Kidney (tissue), 22 donors: ENCODE measurements at regions of chr12 and their contacts with region 1.

Region 1: DNA sequence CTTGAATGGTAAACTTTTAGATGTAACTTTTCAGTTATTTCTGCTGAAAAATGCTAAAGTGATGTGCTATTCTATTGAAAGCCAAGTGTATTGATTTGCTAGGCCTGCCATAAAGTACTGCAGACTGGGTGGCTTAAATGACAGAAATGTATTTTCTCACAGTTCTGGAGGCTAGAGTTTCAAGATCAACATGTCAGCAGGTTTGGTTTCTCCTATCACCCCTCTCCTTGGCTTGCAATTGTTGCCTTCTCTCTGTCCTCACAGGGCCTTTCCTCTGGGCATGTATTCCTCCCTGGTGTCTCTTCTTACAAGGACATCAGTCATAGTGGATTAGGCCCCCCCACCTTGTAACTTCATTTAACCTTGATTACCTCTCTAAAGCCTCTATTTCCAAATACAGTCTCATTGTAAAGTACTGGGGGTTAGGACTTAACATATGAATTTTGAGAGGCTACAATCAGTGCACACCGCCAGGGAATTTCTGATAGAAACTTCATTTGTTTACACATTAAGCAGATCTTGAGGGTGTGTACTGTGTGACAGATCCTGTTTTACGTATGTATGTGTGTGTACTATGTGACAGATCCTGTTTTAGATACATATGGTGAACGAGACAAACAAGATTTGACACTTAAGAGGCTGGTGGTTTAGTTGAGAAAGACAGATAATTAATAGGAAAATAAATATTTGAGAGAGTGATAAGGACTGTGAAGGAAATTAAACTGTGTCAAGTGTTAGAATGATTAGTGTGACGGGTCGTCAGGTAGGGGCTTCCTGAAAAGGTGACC is 49.5 kb downstream of the ADIPOR2 start:
- DNase-seq: peak in 3 of 5 donors; percentile 58 to 84 (median 79)
- H3K4me3 ChIP-seq: no peak overlapping the region
- H3K27ac ChIP-seq: no peak overlapping the region
- H3K4me1 ChIP-seq: peaks cover 0 to 2% (median 0%) of the 10 kb centered on the region in 3 donors
- H3K27me3 ChIP-seq: no peaks in the 10 kb centered on the region
- CTCF ChIP-seq: no peak

Region 2: GRCh38 chr12:1690578-1691122 is 49.7 kb before region 1 on chr12 and contains the start of gene ADIPOR2:
- intact Hi-C with region 1: loop called (anchors 10 kb)
- DNase-seq: peak; percentile 96 to 99 (median 98)
- H3K4me3 ChIP-seq: peak within 1 kb of the TSS; percentile 85 to 90 (median 86)
- H3K27ac ChIP-seq: peak within 1 kb of the TSS; percentile 85 to 94
- H3K4me1 ChIP-seq: peaks cover 0 to 2% (median 0%) of the 10 kb centered on the region in 3 donors
- H3K27me3 ChIP-seq: no peaks in the 10 kb centered on the region
- CTCF ChIP-seq: no peak
- total RNA-seq, gene ADIPOR2: 50.0 TPM